Activated CD4-positive, alpha-beta T cell treated with anti-CD3 and anti-CD28 coated beads for 36 hours (primary cell): ENCODE measurements at regions of chr20 and their contacts with region 1.

Region 1: GRCh38 chr20:25195014-25195961 is at the start of gene ENTPD6:
- DNase-seq: peak; percentile 94
- ATAC-seq: peak; percentile 86
- H3K4me3 Mint-ChIP-seq: peak within 1 kb of the TSS; percentile 84
- H3K27ac Mint-ChIP-seq: peak within 1 kb of the TSS; percentile 85
- H3K4me1 Mint-ChIP-seq: peaks cover 39% of the 10 kb centered on the region
- H3K27me3 Mint-ChIP-seq: no peaks in the 10 kb centered on the region
- total RNA-seq, gene ENTPD6: 34.3 to 41.5 TPM

Region 2: GRCh38 chr20:24965065-24965929 is 230.0 kb before region 1 on chr20:
- CTCF ChIA-PET with region 1: no interaction called
- POLR2A ChIA-PET with region 1: no interaction called
- intact Hi-C with region 1: no loop called
- DNase-seq: no peak
- ATAC-seq: no peak
- H3K4me3 Mint-ChIP-seq: no peak overlapping the region
- H3K27ac Mint-ChIP-seq: peak overlapping the region; percentile 63
- H3K4me1 Mint-ChIP-seq: peaks cover 13% of the 10 kb centered on the region
- H3K27me3 Mint-ChIP-seq: no peaks in the 10 kb centered on the region

Region 3: GRCh38 chr20:25057234-25058050 is 137.8 kb before region 1 on chr20:
- CTCF ChIA-PET with region 1: no interaction called
- POLR2A ChIA-PET with region 1: interaction called, 3 read pairs
- intact Hi-C with region 1: loop called in 1 of 2 experiments (anchors 1 kb)
- DNase-seq: peak; percentile 86
- ATAC-seq: peak; percentile 52
- H3K4me3 Mint-ChIP-seq: peak overlapping the region; percentile 74
- H3K27ac Mint-ChIP-seq: peak overlapping the region; percentile 77
- H3K4me1 Mint-ChIP-seq: peaks cover 53% of the 10 kb centered on the region
- H3K27me3 Mint-ChIP-seq: no peaks in the 10 kb centered on the region

Region 4: DNA sequence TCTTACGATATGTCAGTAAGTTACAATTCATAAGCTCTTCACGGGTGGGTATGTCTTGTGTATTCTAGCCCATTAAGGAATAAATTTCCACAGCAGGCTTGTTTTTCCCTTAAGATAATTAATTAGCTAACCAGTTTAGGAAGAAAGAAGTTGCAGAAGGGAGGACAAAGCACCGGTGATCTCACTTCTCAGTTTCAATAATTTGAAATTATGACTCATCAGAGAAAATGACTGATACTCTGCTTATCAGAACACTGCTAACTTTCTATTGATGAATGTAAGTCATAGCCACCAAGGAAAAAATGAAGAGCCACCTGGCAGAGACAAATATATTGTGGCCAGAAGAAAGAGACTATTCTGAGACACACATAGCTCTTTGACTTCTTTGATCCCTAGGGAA is 34.8 kb before region 1 on chr20:
- CTCF ChIA-PET with region 1: no interaction called
- POLR2A ChIA-PET with region 1: no interaction called
- intact Hi-C with region 1: loop called in 1 of 2 experiments (anchors 1 kb)
- DNase-seq: no peak
- ATAC-seq: peak; percentile 93
- H3K4me3 Mint-ChIP-seq: no peak overlapping the region
- H3K27ac Mint-ChIP-seq: peak overlapping the region; percentile 69
- H3K4me1 Mint-ChIP-seq: peaks cover 13% of the 10 kb centered on the region
- H3K27me3 Mint-ChIP-seq: no peaks in the 10 kb centered on the region

Region 5: DNA sequence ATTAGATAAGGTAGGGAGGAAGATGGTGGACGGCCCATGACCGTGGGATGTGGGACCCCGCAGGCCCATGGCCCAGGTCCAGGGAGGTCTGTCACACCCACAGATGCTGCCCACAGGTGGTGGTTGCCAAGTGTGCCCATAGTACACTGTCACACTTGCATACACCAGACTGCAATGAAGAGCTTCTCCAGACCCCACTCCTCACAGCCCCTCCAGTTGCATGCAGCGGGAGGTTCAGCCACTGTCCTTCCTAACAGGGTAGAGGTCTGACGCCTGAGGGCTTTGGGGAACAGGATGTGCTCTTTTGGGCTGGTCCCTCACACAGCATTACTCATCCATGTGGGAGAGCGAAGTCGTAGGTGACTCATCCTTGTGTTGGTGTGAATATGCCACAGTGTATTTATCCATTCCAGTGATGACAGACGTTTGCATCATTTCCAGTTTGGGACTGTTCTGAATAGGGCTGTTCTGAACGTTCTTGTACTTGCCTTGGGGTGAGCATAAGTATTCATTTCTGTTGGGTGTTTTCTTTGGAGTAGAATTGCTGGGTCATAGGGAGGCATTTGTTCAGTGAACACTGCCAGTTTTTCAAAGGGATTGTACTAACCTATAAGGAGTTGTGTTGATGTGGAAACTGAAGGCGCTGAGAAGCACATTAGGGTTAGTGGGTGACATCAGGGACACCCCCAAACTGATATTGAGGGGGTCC is 42.5 kb after region 1 on chr20:
- CTCF ChIA-PET with region 1: no interaction called
- POLR2A ChIA-PET with region 1: no interaction called
- intact Hi-C with region 1: loop called in 1 of 2 experiments (anchors 2 kb)
- DNase-seq: peak; percentile 82
- ATAC-seq: peak; percentile 97
- H3K4me3 Mint-ChIP-seq: peak overlapping the region; percentile 56
- H3K27ac Mint-ChIP-seq: peak overlapping the region; percentile 96
- H3K4me1 Mint-ChIP-seq: peaks cover 30% of the 10 kb centered on the region
- H3K27me3 Mint-ChIP-seq: peaks cover 12% of the 10 kb centered on the region

Region 6: GRCh38 chr20:25390538-25391528 is 195.5 kb after region 1 on chr20 and contains the start of gene ABHD12:
- CTCF ChIA-PET with region 1: no interaction called
- POLR2A ChIA-PET with region 1: no interaction called
- intact Hi-C with region 1: loop called in 1 of 2 experiments (anchors 5 kb)
- DNase-seq: peak; percentile 98
- ATAC-seq: peak; percentile 97
- H3K4me3 Mint-ChIP-seq: peak within 1 kb of the TSS; percentile 79
- H3K27ac Mint-ChIP-seq: peak within 1 kb of the TSS; percentile 84
- H3K4me1 Mint-ChIP-seq: peaks cover 12% of the 10 kb centered on the region
- H3K27me3 Mint-ChIP-seq: no peaks in the 10 kb centered on the region
- total RNA-seq, gene ABHD12: 17.4 to 18.7 TPM

Region 7: DNA sequence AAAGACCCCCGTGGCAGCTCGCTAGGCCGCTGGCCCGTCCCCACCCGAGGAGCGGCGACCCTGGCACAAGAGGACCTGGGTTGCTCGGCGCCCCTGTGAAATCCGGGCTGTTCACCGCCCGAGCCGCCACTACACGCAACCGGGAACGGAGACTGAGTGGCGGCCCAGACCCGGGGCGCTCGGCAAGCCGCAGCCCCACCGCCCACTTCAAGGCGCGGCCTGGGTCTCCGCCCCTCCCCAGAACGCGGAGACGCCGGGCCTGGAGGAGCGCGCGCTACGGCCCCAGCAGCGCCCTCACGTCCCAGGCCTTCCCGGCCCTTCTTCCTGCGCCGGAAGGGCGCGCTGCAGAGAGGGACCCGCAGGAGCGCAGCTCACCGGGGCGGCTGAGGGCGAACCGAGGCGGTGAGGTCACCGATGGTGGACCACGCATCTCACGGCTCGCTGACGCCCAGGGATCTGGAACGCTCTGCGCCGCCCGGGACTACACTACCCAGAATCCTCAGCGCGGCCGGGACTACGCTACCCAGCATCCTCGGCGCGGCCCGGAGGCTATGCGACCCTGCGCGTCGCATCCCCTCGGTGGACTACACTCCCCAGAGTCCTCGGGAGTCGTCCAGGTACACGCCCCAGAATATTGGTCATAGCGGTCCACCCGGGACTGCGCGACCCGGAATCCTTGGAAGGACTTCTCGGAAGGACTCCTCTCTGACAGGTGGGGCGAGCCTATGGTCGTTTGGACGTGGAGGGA is 501.3 kb after region 1 on chr20 and contains the start of gene ZNF337:
- CTCF ChIA-PET with region 1: no interaction called
- POLR2A ChIA-PET with region 1: no interaction called
- intact Hi-C with region 1: loop called in 1 of 2 experiments (anchors 1 kb)
- DNase-seq: peak; percentile 97
- ATAC-seq: peak; percentile 97
- H3K4me3 Mint-ChIP-seq: peak within 1 kb of the TSS; percentile 83
- H3K27ac Mint-ChIP-seq: peak within 1 kb of the TSS; percentile 84
- H3K4me1 Mint-ChIP-seq: peaks cover 41% of the 10 kb centered on the region
- H3K27me3 Mint-ChIP-seq: no peaks in the 10 kb centered on the region
- total RNA-seq, gene ZNF337: 12.6 TPM